CD8-positive, alpha-beta memory T cell (primary cell): ENCODE measurements at regions of chr13 and their contacts with region 1.

Region 1: GRCh38 chr13:30114571-30115256 is 192.6 kb downstream of the KATNAL1 start:
- DNase-seq: peak; percentile 86 to 93 (median 87)
- H3K4me3 ChIP-seq: peak overlapping the region; percentile 47
- H3K4me3 Mint-ChIP-seq: peak overlapping the region; percentile 76 to 94 (median 86)
- H3K27ac ChIP-seq: no peak overlapping the region
- H3K27ac Mint-ChIP-seq: peak overlapping the region; percentile 2 to 93 (median 77)
- H3K4me1 ChIP-seq: peaks cover 21% of the 10 kb centered on the region
- H3K4me1 Mint-ChIP-seq: peaks cover 23 to 39% (median 34%) of the 10 kb centered on the region in 3 donors
- H3K27me3 ChIP-seq: no peaks in the 10 kb centered on the region
- H3K27me3 Mint-ChIP-seq: peaks cover 0 to 2% of the 10 kb centered on the region in 2 donors

Region 2: GRCh38 chr13:29771247-29771646 is 343.5 kb before region 1 on chr13:
- CTCF ChIA-PET with region 1: interaction called, 193 read pairs
- POLR2A ChIA-PET with region 1: interaction called, 5 read pairs
- DNase-seq: peak in 2 of 5 donors; percentile 39 to 51
- H3K4me3 ChIP-seq: no peak overlapping the region
- H3K4me3 Mint-ChIP-seq: no peak overlapping the region
- H3K27ac ChIP-seq: no peak overlapping the region
- H3K27ac Mint-ChIP-seq: no peak overlapping the region
- H3K4me1 ChIP-seq: no peaks in the 10 kb centered on the region
- H3K4me1 Mint-ChIP-seq: peaks cover 9 to 12% (median 9%) of the 10 kb centered on the region in 3 donors
- H3K27me3 ChIP-seq: no peaks in the 10 kb centered on the region
- H3K27me3 Mint-ChIP-seq: no peaks in the 10 kb centered on the region

Region 3: DNA sequence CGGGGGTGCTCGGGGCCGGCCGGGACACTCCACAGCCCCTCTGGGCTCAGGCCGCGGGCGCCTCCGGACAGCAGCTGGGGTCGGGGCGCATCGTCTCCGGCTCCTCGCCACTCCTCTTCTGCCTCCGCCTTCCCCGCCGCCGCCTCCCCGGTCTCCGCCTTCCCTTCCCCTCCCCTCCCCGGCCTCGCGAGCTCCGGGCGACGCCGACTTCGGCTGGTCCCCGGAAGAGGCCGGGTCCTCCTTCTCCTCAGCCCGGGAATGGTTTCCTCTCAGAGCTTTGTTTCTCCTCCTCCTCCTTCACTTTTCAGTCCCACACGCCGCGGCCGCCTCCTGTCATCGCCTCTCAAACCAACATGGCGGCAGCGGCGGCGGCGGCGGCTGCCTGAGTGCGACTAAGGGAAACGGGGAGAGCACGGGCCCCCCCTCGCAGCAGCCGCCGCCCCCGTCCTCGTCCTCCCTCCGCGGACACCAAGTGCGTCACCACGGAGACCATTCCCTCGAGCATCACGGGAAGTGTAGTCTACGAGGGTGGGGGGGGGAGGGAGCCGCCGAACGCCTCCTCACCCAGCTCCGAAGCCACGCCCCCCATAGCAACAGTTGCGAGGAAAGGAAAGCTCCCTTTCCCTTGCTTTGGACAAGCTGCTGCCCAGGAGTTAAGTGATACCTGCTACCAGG is 264.4 kb before region 1 on chr13 and contains the start of gene UBL3:
- CTCF ChIA-PET with region 1: interaction called, 175 read pairs
- POLR2A ChIA-PET with region 1: interaction called, 14 read pairs
- DNase-seq: peak; percentile 88 to 96 (median 91)
- H3K4me3 ChIP-seq: peak within 1 kb of the TSS; percentile 81
- H3K4me3 Mint-ChIP-seq: peak within 1 kb of the TSS; percentile 90 to 100 (median 98)
- H3K27ac ChIP-seq: peak within 1 kb of the TSS; percentile 90
- H3K27ac Mint-ChIP-seq: peak within 1 kb of the TSS; percentile 91 to 100 (median 99)
- H3K4me1 ChIP-seq: peaks cover 13% of the 10 kb centered on the region
- H3K4me1 Mint-ChIP-seq: peaks cover 30 to 34% (median 30%) of the 10 kb centered on the region in 3 donors
- H3K27me3 ChIP-seq: no peaks in the 10 kb centered on the region
- H3K27me3 Mint-ChIP-seq: peaks cover 0 to 2% of the 10 kb centered on the region in 2 donors
- total RNA-seq, gene UBL3: 15.0 to 15.2 TPM

Region 4: DNA sequence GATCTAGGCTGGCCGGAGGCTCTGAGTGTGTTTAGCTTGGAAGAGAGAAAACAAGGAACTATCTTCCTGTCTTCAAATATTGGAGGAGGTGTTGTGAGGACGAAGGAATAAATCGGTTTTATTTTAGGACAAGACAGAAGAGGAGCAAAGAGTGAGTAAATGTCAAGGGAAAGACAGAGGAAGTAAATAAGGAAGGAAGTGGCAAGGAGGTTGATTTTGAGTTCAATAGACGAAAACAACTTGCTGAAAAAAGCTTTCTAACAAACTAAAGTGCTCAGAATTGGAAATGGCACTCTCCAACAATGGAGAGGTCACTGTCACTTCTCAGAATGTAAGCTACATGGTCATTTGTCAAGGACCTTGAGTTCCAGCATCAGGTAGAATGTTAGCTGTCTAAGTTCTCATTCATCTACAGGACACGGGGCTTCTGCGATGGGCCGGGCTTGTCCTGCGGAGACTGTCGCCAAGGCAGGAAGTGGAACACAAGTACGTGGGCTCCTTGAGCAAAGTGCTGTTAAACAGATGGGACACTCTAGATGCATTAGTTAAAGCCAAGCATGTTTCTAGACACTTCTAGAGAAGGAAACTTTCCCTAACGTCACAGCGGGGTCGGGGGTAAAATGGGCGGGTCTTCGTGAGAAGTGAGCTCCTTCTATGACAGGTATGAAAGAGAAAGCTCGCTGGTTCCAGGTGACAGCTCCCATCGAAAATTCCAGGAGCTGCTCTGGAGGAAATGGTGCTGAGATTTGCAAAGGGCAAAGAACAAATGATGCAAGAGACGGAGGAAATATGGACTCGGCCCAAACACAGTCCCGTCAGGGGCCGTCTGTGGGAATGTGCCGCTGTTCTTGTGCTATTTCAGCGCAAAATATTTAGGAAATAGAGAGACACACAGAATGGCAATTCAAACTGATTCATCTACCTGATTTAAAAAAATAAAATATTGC is 160.4 kb before region 1 on chr13:
- CTCF ChIA-PET with region 1: interaction called, 15 read pairs
- POLR2A ChIA-PET with region 1: interaction called, 3 read pairs
- DNase-seq: peak; percentile 23 to 74 (median 55)
- H3K4me3 ChIP-seq: peak overlapping the region; percentile 40
- H3K4me3 Mint-ChIP-seq: peak overlapping the region; percentile 25 to 91 (median 84)
- H3K27ac ChIP-seq: no peak overlapping the region
- H3K27ac Mint-ChIP-seq: peak overlapping the region; percentile 41 to 94 (median 85)
- H3K4me1 ChIP-seq: peaks cover 44% of the 10 kb centered on the region
- H3K4me1 Mint-ChIP-seq: peaks cover 41 to 66% (median 53%) of the 10 kb centered on the region in 3 donors
- H3K27me3 ChIP-seq: no peaks in the 10 kb centered on the region
- H3K27me3 Mint-ChIP-seq: peaks cover 0 to 3% of the 10 kb centered on the region in 2 donors

Region 5: GRCh38 chr13:30132623-30133553 is 18.2 kb after region 1 on chr13:
- CTCF ChIA-PET with region 1: interaction called, 62 read pairs
- POLR2A ChIA-PET with region 1: interaction called, 3 read pairs
- DNase-seq: peak; percentile 87 to 97 (median 93)
- H3K4me3 ChIP-seq: peak overlapping the region; percentile 11
- H3K4me3 Mint-ChIP-seq: peak overlapping the region in 6 of 7 donors; percentile 29 to 76 (median 60)
- H3K27ac ChIP-seq: no peak overlapping the region
- H3K27ac Mint-ChIP-seq: peak overlapping the region in 6 of 8 donors; percentile 10 to 96 (median 68)
- H3K4me1 ChIP-seq: peaks cover 15% of the 10 kb centered on the region
- H3K4me1 Mint-ChIP-seq: peaks cover 23 to 30% (median 30%) of the 10 kb centered on the region in 3 donors
- H3K27me3 ChIP-seq: no peaks in the 10 kb centered on the region
- H3K27me3 Mint-ChIP-seq: peaks cover 0 to 2% of the 10 kb centered on the region in 2 donors

Region 6: GRCh38 chr13:30465585-30466357 is 351.1 kb after region 1 on chr13 and contains the start of gene HMGB1:
- CTCF ChIA-PET with region 1: interaction called, 10 read pairs
- POLR2A ChIA-PET with region 1: no interaction called
- DNase-seq: peak; percentile 93 to 99 (median 96)
- H3K4me3 ChIP-seq: peak within 1 kb of the TSS; percentile 77
- H3K4me3 Mint-ChIP-seq: peak within 1 kb of the TSS; percentile 91 to 99 (median 97)
- H3K27ac ChIP-seq: peak within 1 kb of the TSS; percentile 91
- H3K27ac Mint-ChIP-seq: peak within 1 kb of the TSS; percentile 98 to 99 (median 98)
- H3K4me1 ChIP-seq: peaks cover 27% of the 10 kb centered on the region
- H3K4me1 Mint-ChIP-seq: peaks cover 36 to 44% (median 40%) of the 10 kb centered on the region in 3 donors
- H3K27me3 ChIP-seq: no peaks in the 10 kb centered on the region
- H3K27me3 Mint-ChIP-seq: peaks cover 0 to 10% of the 10 kb centered on the region in 2 donors
- total RNA-seq, gene HMGB1: 694 to 729 TPM